GM18951 (cell line): ENCODE measurements at regions of chr22 and their contacts with region 1.

Region 1: DNA sequence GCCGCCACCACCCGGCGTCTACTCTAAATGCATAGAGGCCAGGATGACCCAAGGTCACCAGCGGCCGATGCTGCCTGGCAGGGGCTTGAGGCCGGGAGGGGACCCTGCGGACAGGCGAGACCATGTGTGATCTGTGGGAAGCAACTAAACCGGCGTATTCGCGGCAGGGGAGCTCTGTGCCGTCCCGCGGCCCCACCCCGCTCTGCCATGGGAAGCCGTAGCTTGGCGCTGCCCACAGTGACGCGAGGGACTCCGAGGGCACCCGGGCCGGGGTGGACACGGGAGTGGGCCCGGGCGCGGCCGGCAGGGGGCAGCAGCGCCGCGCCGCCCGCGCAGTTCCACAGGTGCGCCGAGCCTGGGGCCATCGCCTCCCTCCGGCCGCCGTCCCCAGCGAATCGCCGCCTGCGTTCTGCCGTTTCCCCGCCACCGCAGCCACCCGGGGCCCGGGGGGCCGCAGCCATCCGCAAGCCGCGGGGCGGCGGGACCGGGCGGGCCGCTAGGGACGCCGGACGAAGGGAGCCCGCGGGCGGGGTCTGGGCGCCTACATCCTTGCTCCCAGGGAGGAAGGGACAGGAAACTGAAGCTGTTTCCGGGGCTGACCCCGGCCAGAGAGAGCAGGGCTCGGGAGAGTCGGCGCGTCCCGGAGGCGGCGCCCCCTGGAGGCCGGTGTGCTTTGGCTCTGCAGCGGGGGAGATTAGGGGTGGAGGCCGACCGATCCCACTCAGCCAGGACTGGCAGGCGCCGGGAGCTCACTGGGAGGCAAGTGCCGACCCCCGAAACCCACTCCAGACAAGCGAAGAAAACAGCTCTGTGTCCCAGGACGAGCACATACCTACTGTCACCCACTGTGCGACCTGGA is 12.5 kb upstream of the HDHD5 start:
- POLR2A ChIP-seq: peak; percentile 79

Region 2: DNA sequence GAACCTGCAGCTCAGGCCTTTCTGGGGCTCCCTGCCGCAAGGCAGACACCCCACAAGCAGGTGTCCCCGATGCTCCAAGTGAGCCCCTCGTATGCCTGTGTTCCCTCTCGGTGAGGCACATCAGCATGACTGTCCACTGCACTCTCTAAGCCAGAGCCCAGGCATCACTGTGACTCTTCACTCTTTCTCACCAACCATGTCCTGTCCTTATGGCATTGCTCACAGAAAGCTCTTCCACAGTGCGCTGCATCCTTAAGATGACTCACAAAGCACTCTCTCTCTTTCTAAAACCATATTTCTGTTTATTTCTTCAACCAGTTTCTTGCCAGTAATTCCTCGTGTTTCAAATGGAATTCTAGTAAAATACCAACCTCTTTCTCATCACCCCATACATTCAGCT is 181.6 kb before region 1 on chr22:
- in situ Hi-C with region 1: no loop called
- POLR2A ChIP-seq: no peak

Region 3: GRCh38 chr22:17077255-17077654 is 94.3 kb before region 1 on chr22:
- in situ Hi-C with region 1: loop called (anchors 10 kb)
- POLR2A ChIP-seq: no peak

Region 4: GRCh38 chr22:17501679-17502285 is 330.2 kb after region 1 on chr22:
- in situ Hi-C with region 1: loop called (anchors 10 kb)
- POLR2A ChIP-seq: no peak